ENCODE measurements at regions of chr6 and their contacts with region 1.

Region 1: DNA sequence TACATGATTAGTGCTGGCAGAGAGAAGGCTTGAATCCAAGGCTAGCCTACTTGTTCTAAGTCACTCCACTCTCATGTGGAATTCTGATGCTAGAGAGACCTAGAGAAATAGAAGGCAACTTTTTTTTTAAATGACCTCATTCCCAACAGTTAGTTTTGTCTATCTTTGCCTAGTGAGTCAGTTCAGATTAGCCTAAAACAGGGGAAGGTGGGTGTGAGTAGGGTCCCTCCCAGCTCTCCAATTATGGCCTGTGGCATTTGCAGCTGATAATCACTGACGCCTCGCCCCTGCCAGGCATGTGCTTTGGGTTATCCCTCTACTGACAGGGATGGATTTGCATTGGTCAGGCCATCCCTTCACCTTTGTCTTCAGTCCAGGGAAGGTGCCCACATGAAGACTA is 13.6 kb downstream of the TXLNB start:
- DNase-seq: peak in 2 of 5 donors; percentile 39 to 40
- ATAC-seq: peak; percentile 45 to 89 (median 78)
- H3K4me3 ChIP-seq: no peak overlapping the region
- H3K27ac ChIP-seq: peak overlapping the region in 11 of 12 donors; percentile 41 to 85 (median 70)
- H3K4me1 ChIP-seq: peaks cover 0 to 49% (median 21%) of the 10 kb centered on the region in 12 donors
- H3K27me3 ChIP-seq: no peaks in the 10 kb centered on the region
- CTCF ChIP-seq: no peak
- POLR2A ChIP-seq: no peak

Region 2: DNA sequence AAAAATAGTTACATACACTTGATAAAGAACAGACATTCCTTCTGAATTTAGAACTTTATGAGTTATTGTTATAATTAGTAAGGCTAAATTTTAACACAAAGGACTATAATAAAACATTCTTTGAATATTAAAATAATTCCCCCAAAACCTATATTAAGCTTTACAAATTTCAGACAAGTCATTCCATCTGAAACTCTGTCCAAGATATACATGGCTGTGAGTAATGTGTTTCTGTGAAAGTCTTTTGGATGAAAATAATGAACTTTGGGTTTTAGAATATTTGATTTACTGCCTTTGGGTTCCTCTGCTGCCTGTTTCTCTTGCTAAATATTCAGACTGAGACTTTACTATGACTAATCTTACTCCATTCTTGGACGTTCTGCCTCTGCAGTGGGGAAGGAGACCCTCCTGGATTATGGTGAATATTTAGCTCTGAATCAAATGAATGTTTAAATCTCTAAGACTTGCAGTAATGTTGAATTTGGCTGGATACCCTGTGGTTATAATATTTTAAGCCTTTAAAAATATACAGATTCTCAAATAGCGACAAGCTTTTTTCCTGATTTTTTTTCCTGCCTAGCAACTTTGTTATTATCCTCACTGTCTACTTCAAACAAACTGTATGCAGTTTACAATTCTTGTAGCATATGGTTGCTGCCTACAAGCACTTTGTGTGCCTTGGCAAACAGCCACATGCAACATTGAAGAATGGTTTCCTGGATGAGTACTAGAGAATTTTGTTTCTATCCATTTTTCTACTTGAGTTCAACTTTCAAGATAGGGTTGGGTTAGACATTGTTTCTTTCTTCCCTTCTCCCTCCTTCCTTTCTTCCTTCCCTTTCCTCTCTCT is 37.8 kb before region 1 on chr6:
- intact Hi-C with region 1: loop called in 1 of 10 experiments (anchors 5 kb)
- DNase-seq: peak in 2 of 5 donors; percentile 28 to 51
- ATAC-seq: peak in 1 of 4 donors; percentile 46
- H3K4me3 ChIP-seq: no peak overlapping the region
- H3K27ac ChIP-seq: peak overlapping the region in 4 of 12 donors; percentile 17 to 58 (median 23)
- H3K4me1 ChIP-seq: peaks cover 0 to 24% (median 10%) of the 10 kb centered on the region in 12 donors
- H3K27me3 ChIP-seq: no peaks in the 10 kb centered on the region
- CTCF ChIP-seq: no peak
- POLR2A ChIP-seq: no peak

Region 3: GRCh38 chr6:139433631-139434419 is 155.6 kb after region 1 on chr6:
- intact Hi-C with region 1: no loop called
- DNase-seq: no peak
- ATAC-seq: no peak
- H3K4me3 ChIP-seq: no peak overlapping the region
- H3K27ac ChIP-seq: no peak overlapping the region
- H3K4me1 ChIP-seq: peaks cover 0 to 4% (median 0%) of the 10 kb centered on the region in 12 donors
- H3K27me3 ChIP-seq: no peaks in the 10 kb centered on the region
- CTCF ChIP-seq: no peak
- POLR2A ChIP-seq: no peak

Region 4: GRCh38 chr6:139515511-139515910 is 237.3 kb after region 1 on chr6:
- intact Hi-C with region 1: no loop called
- DNase-seq: no peak
- ATAC-seq: no peak
- H3K4me3 ChIP-seq: no peak overlapping the region
- H3K27ac ChIP-seq: no peak overlapping the region
- H3K4me1 ChIP-seq: peaks cover 0 to 15% (median 7%) of the 10 kb centered on the region in 12 donors
- H3K27me3 ChIP-seq: no peaks in the 10 kb centered on the region
- CTCF ChIP-seq: no peak
- POLR2A ChIP-seq: no peak